Activated T-helper 1 cell treated with anti-CD3 and anti-CD28 coated beads, Interleukin-12 subunit alpha, Interleukin-12 subunit beta, Interleukin-2, Interleukin-4 antibody, amounts not matched to agents 30 ng/mL and 10 ng/mL and 1 ng/mL, durations not matched to agents 14 hours and 24 hours and 36 hours (primary cell): ENCODE measurements at regions of chr7 and their contacts with region 1.

Region 1: GRCh38 chr7:2709553-2710285 is 21.7 kb downstream of the AMZ1 start:
- DNase-seq: peak; percentile 74
- H3K4me3 Mint-ChIP-seq: peak overlapping the region; percentile 26
- H3K27ac Mint-ChIP-seq: peak overlapping the region; percentile 23
- H3K4me1 Mint-ChIP-seq: peaks cover 36% of the 10 kb centered on the region
- H3K27me3 Mint-ChIP-seq: peaks cover 32% of the 10 kb centered on the region

Region 2: GRCh38 chr7:2465928-2466327 is 243.8 kb before region 1 on chr7:
- intact Hi-C with region 1: no loop called
- DNase-seq: no peak
- H3K4me3 Mint-ChIP-seq: no peak overlapping the region
- H3K27ac Mint-ChIP-seq: no peak overlapping the region
- H3K4me1 Mint-ChIP-seq: peaks cover 5% of the 10 kb centered on the region
- H3K27me3 Mint-ChIP-seq: peaks cover 6% of the 10 kb centered on the region

Region 3: DNA sequence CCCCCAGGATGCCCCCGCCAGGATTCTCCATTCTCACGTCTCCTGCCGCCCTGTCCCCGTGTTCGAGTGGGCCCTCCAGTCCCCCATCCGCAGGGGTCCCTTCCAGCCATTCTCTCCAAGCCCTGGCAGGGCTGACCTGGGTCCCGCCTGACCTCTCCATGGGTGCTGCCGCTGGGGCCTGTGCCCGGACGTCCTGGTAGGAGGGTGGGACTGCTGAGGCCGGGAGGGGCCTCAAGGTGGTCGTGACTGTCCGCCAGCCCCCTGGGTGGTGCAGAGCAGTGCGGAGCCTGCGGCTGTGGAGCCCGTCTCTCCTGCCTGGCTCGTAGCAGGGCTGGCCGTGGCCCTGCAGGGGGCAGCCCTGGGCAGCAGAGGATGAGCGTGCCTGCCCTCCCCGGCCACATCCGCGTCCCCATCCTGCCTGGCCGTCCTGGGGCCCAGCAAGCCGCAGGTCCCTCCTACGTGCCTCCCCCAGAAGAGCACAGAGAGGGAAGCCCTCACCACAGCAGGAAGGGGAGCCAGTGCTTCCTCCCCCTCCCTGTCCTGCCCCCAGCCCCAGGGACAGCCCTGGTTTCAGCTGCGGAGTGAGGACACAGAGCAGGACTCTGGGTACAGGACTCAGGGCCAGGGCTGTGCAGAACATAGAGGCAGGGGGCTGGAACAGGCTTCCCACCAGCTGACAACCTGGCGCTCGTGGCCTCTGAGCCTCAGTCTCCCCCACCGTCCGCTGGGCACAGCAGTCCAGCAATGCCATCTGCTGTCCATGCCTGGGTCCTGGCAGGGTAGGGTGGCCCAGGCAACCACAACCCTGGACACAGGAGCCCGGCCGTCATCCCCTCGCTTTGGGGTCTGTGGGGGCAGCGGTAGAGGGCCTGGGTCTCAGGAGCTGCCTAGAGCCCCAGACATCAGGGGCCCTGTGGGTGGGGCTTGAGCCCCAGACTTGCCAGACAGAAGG is 232.0 kb before region 1 on chr7:
- intact Hi-C with region 1: loop called (anchors 1 kb)
- DNase-seq: peak; percentile 52
- H3K4me3 Mint-ChIP-seq: no peak overlapping the region
- H3K27ac Mint-ChIP-seq: no peak overlapping the region
- H3K4me1 Mint-ChIP-seq: no peaks in the 10 kb centered on the region
- H3K27me3 Mint-ChIP-seq: peaks cover 5% of the 10 kb centered on the region

Region 4: GRCh38 chr7:2670720-2671391 is 38.9 kb before region 1 on chr7:
- intact Hi-C with region 1: loop called (anchors 1 kb)
- DNase-seq: peak; percentile 48
- H3K4me3 Mint-ChIP-seq: no peak overlapping the region
- H3K27ac Mint-ChIP-seq: no peak overlapping the region
- H3K4me1 Mint-ChIP-seq: no peaks in the 10 kb centered on the region
- H3K27me3 Mint-ChIP-seq: peaks cover 41% of the 10 kb centered on the region

Region 5: DNA sequence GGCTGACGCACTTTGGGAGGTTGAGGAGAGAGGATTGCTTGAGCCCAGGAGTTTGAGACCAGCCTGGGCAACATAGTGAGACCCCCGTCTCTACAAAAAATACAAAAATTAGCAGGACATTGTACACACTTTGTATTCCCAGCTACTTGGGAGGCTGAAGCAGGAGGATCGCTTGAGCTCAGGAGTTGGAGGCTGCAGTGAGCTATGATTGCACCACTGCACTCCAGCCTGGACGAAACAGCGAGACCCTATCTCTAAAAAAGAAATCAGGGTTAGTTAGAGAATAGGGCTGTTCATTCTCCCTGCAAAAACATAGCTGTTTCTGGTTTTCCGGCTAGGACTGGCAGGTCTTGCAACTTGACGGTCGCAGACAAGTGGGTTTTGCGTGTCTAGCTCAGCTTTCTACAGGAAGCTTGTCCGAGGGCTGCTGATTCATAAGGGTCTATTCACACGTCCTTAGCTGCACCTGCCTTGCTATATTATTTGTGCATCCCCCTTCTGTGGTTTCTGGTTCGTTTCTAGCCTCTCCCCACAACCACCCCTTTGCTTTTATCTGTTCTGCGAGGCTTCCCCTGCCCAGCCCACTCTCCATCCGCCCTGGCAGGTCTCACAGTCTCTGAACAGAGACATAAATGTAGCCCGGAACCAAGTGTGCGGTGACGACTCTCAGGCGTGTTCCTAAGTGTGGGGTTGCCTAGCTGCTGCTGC is 11.0 kb before region 1 on chr7:
- intact Hi-C with region 1: loop called (anchors 1 kb)
- DNase-seq: peak; percentile 68
- H3K4me3 Mint-ChIP-seq: peak overlapping the region; percentile 56
- H3K27ac Mint-ChIP-seq: peak overlapping the region; percentile 85
- H3K4me1 Mint-ChIP-seq: peaks cover 21% of the 10 kb centered on the region
- H3K27me3 Mint-ChIP-seq: peaks cover 17% of the 10 kb centered on the region

Region 6: DNA sequence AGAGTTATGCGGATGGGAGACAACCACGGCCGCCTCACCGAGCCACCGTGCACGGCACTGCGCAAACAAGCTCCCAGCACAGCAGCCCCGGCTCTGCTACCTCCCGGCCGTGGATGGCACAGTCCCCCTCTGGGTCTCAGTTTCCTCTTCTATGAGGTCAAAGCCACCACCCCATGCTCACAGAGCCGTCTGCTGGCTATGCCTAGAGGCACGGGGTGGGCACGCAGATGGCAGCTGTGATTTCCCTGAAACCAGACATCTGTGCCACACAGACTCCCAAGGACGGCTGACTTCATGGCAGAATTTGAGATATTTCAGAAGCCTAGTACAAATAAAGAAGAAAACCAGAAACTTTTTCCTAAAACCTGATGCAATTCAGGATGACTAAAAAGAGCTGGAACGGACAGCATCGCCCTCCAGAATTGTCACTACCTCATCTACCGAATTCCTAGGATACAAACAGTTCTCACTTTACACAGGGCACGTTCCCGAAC is 51.5 kb after region 1 on chr7:
- intact Hi-C with region 1: no loop called
- DNase-seq: no peak
- H3K4me3 Mint-ChIP-seq: no peak overlapping the region
- H3K27ac Mint-ChIP-seq: no peak overlapping the region
- H3K4me1 Mint-ChIP-seq: peaks cover 56% of the 10 kb centered on the region
- H3K27me3 Mint-ChIP-seq: no peaks in the 10 kb centered on the region

Region 7: DNA sequence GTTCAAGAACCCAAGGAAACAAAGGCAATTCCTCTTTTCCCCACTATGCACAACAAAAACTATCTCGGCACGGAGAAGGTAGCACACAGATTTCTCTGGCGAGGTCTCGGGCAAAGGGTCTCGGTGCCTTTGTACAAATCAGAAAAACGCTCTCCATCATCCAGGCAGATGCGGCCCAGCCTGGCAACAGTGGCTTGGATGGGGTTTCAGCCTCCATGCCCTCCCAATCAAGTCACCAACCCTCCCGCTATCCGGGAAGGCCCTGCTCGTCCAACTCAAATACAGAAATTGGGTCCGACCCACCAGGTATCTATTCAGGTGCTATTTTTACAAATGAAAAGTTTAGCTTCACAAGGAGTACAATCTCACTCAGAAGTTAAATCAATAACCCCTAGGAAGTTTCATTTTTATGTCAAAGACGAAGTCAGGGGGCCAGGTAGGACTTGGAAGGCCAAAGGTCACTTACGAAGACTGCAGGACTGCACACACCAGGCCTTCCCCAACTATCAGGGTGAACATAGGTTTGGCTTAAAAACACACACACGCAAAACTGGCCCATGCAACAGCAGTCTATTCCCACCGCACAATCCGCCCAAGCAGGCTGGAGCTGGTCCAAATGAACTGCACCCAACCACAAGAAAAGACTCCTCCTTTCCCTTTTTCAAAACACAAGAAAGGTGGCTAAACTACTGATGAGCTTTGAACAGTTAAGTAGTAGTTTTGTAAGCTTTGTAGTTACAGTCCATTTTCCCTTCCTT is 91.4 kb after region 1 on chr7:
- intact Hi-C with region 1: no loop called
- DNase-seq: no peak
- H3K4me3 Mint-ChIP-seq: no peak overlapping the region
- H3K27ac Mint-ChIP-seq: no peak overlapping the region
- H3K4me1 Mint-ChIP-seq: peaks cover 30% of the 10 kb centered on the region
- H3K27me3 Mint-ChIP-seq: no peaks in the 10 kb centered on the region